ENCODE measurements at regions of chr9 and their contacts with region 1.

Region 1: GRCh38 chr9:126398403-126399058 is 71.9 kb downstream of the MVB12B start:
- DNase-seq: peak; percentile 72 to 86
- ATAC-seq: peak; percentile 81 to 93 (median 90)
- H3K4me3 ChIP-seq: no peak overlapping the region
- H3K27ac ChIP-seq: peak overlapping the region in 1 of 10 donors; percentile 46
- H3K4me1 ChIP-seq: peaks cover 0 to 28% (median 5%) of the 10 kb centered on the region in 9 donors
- H3K27me3 ChIP-seq: no peaks in the 10 kb centered on the region
- CTCF ChIP-seq: peak; percentile 93 to 99 (median 98)

Region 2: GRCh38 chr9:124754289-124754688 is 1644.2 kb before region 1 on chr9:
- intact Hi-C with region 1: loop called in 1 of 10 experiments (anchors 10 kb)
- DNase-seq: no peak
- ATAC-seq: no peak
- H3K4me3 ChIP-seq: no peak overlapping the region
- H3K27ac ChIP-seq: no peak overlapping the region
- H3K4me1 ChIP-seq: peaks cover 0 to 20% (median 0%) of the 10 kb centered on the region in 9 donors
- H3K27me3 ChIP-seq: peaks cover 0 to 41% (median 7%) of the 10 kb centered on the region in 7 donors
- CTCF ChIP-seq: peak in 4 of 9 donors; percentile 19 to 33 (median 22)

Region 3: GRCh38 chr9:125407974-125408900 is 990.3 kb before region 1 on chr9:
- intact Hi-C with region 1: loop called in 3 of 10 experiments (anchors 5 to 10 kb)
- DNase-seq: peak; percentile 71 to 84
- ATAC-seq: peak; percentile 86 to 94 (median 90)
- H3K4me3 ChIP-seq: peak overlapping the region; percentile 46 to 83 (median 68)
- H3K27ac ChIP-seq: peak overlapping the region in 5 of 10 donors; percentile 29 to 76 (median 34)
- H3K4me1 ChIP-seq: peaks cover 0 to 13% (median 4%) of the 10 kb centered on the region in 9 donors
- H3K27me3 ChIP-seq: peaks cover 0 to 10% (median 3%) of the 10 kb centered on the region in 7 donors
- CTCF ChIP-seq: peak; percentile 68 to 97 (median 94)

Region 4: DNA sequence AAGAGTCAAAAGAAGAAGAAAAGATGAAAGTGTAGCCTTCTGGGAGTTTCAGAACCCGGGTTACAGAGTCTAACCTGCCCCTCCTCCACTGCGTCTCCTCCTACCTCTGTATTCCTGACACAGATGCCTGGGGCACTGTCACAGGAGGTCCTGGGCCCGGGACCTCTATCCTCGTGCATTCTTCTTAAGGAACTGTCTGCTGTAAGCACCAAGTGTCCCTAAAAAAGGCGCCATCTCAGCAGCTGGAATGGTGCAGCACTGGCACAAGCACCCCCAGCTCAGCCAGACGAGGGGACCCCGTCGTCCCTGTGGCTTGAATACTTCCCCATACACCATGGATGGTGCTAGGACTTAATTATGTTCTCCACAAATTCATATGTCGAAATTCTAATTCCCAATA is 107.7 kb before region 1 on chr9:
- intact Hi-C with region 1: no loop called
- DNase-seq: no peak
- ATAC-seq: no peak
- H3K4me3 ChIP-seq: no peak overlapping the region
- H3K27ac ChIP-seq: no peak overlapping the region
- H3K4me1 ChIP-seq: no peaks in the 10 kb centered on the region
- H3K27me3 ChIP-seq: peaks cover 0 to 23% (median 4%) of the 10 kb centered on the region in 7 donors
- CTCF ChIP-seq: no peak

Region 5: GRCh38 chr9:126301985-126302603 is 96.4 kb before region 1 on chr9:
- intact Hi-C with region 1: loop called (anchors 1 to 5 kb)
- DNase-seq: peak in 1 of 2 donors; percentile 71
- ATAC-seq: peak in 7 of 8 donors; percentile 80 to 90 (median 85)
- H3K4me3 ChIP-seq: no peak overlapping the region
- H3K27ac ChIP-seq: no peak overlapping the region
- H3K4me1 ChIP-seq: no peaks in the 10 kb centered on the region
- H3K27me3 ChIP-seq: peaks cover 0 to 3% (median 0%) of the 10 kb centered on the region in 7 donors
- CTCF ChIP-seq: peak; percentile 38 to 87 (median 73)

Region 6: DNA sequence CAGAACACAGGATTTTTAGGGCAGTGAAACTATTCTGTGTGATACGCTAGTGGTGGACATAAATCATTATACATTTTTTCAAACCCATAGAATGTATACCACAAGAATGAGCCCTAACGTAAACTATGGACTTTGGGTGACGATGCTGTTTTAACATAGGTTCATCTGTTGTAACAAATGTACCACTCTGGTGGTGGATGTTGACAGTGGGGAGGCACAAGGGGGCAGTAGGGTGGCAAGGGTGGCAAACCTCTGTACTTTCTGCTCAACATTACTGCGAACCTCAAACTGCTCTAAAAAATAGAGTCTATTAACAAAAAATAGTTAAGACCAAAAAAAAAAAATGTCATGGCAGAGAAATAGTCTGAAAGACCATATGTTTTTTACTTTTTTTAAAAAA is 81.0 kb before region 1 on chr9:
- intact Hi-C with region 1: loop called in 7 of 10 experiments (anchors 1 to 5 kb)
- DNase-seq: no peak
- ATAC-seq: peak in 3 of 8 donors; percentile 64 to 76 (median 67)
- H3K4me3 ChIP-seq: no peak overlapping the region
- H3K27ac ChIP-seq: no peak overlapping the region
- H3K4me1 ChIP-seq: peaks cover 0 to 10% (median 0%) of the 10 kb centered on the region in 9 donors
- H3K27me3 ChIP-seq: no peaks in the 10 kb centered on the region
- CTCF ChIP-seq: peak in 8 of 9 donors; percentile 28 to 59 (median 45)

Region 7: GRCh38 chr9:126482361-126483044 is 84.0 kb after region 1 on chr9:
- intact Hi-C with region 1: loop called in 1 of 10 experiments (anchors 10 kb)
- DNase-seq: peak in 1 of 2 donors; percentile 59
- ATAC-seq: peak in 7 of 8 donors; percentile 33 to 62 (median 50)
- H3K4me3 ChIP-seq: peak overlapping the region in 3 of 10 donors; percentile 1 to 17 (median 2)
- H3K27ac ChIP-seq: no peak overlapping the region
- H3K4me1 ChIP-seq: peaks cover 0 to under 1% (median 0%) of the 10 kb centered on the region in 9 donors
- H3K27me3 ChIP-seq: no peaks in the 10 kb centered on the region
- CTCF ChIP-seq: no peak

Region 8: DNA sequence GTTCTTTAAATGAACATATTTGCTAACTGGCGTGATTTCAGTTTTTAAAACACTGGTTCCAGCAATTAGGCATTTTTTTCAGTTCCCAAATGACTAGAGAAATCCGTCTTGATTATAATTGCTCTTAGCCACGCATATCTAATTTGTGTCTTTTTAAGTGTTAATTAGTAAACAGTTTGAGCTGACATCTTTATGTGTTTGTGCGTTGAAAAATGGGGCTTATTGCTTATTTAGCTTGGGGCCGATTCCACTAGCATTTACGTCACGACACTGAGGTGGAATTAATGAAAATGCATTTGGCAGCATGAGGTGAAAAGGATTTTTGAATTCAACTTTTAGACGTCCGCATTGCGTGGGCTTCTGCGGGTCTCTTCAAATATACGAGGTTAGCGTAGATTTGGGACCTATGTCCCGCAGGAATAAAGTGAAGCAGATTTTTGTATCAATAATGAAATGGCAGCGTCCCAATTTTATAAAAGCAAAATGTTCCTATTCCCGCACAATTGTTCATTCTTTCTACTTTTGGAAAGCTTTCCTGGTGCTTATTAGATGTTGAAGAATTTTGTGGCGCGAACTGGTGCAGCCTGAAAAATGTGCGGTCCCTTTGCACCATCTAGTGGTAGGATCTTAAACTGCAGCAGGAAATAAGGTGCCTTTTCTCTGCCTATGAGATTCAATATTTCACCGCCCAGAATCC is 92.5 kb after region 1 on chr9:
- intact Hi-C with region 1: loop called in 4 of 10 experiments (anchors 5 to 10 kb)
- DNase-seq: peak in 1 of 2 donors; percentile 55
- ATAC-seq: peak in 5 of 8 donors; percentile 57 to 69 (median 59)
- H3K4me3 ChIP-seq: no peak overlapping the region
- H3K27ac ChIP-seq: no peak overlapping the region
- H3K4me1 ChIP-seq: peaks cover 0 to 16% (median 0%) of the 10 kb centered on the region in 9 donors
- H3K27me3 ChIP-seq: no peaks in the 10 kb centered on the region
- CTCF ChIP-seq: peak; percentile 83 to 97 (median 90)

Measured in heart right ventricle (tissue), 16 donors.